ENCODE measurements at regions of chr20 and their contacts with region 1.

Region 1: GRCh38 chr20:36199345-36200257 is 36.7 kb upstream of the AAR2 start:
- DNase-seq: peak; percentile 81
- ATAC-seq: peak; percentile 79
- H3K4me3 Mint-ChIP-seq: no peak overlapping the region
- H3K27ac Mint-ChIP-seq: no peak overlapping the region
- H3K4me1 Mint-ChIP-seq: peaks cover 4% of the 10 kb centered on the region
- H3K27me3 Mint-ChIP-seq: peaks cover 26% of the 10 kb centered on the region

Region 2: DNA sequence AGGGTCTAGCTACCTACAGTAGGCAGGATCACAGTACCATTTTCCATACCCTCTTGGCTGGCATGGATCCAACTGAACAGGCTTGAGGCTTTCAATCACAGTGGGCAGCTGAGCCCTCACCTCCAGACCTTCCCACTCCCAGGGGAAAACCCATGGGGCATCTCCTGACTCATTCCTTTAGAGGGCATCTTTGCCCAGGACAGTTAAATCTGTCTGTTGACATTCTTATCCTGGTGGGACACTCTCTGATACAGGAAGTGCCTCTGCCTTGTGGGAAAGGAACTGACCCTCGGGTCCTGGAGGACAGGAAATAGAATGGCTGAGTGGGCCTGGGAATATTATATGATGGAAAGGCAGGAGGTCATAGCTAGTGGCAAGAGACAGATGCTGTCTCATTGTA is 55.3 kb before region 1 on chr20:
- CTCF ChIA-PET with region 1: interaction called, 10 read pairs
- DNase-seq: no peak
- ATAC-seq: no peak
- H3K4me3 Mint-ChIP-seq: no peak overlapping the region
- H3K27ac Mint-ChIP-seq: no peak overlapping the region
- H3K4me1 Mint-ChIP-seq: peaks cover 7% of the 10 kb centered on the region
- H3K27me3 Mint-ChIP-seq: peaks cover 17% of the 10 kb centered on the region

Region 3: DNA sequence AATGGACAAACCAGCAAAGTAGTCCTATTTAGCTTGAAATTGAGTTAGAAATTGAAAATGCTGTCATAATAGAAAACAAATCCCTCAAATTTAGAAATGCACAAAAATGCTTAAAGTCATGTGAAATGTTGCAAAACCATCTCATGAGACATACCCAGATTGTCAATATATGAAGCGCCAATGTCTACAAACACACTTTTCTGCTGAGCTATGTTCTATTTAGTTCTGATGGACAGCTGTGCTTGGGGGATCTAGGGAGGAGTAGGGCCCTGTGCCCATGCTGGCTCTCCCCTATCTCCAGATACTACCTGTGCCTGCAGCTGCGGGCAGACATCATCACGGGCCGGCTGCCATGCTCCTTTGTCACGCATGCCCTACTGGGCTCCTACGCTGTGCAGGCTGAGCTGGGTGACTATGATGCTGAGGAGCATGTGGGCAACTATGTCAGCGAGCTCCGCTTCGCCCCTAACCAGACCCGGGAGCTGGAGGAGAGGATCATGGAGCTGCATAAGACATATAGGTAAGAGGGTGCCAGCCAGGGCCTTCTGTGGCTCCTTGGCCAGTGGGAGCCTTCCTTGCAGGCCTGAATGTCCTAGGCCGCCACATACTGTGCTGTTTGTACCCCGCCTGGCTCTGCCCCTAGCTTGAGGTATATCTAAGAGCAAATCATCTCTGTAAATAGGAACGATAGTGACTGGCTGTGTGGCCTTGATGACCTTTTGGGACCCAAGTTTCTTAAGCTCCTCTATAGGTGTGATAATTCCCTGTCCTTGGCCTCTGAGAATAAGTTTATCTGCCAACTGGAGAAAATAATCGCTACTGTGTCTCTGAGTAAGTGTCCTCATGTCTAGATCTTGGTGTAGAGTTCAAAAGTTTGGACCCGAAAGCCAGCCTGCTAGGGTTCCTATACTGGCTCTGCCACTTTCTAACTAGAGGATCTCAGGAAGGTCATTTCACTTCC is 14.5 kb before region 1 on chr20:
- CTCF ChIA-PET with region 1: interaction called, 12 read pairs
- DNase-seq: no peak
- ATAC-seq: no peak
- H3K4me3 Mint-ChIP-seq: no peak overlapping the region
- H3K27ac Mint-ChIP-seq: no peak overlapping the region
- H3K4me1 Mint-ChIP-seq: peaks cover 7% of the 10 kb centered on the region
- H3K27me3 Mint-ChIP-seq: no peaks in the 10 kb centered on the region

Region 4: GRCh38 chr20:36235892-36236785 is 36.5 kb after region 1 on chr20 and contains the start of gene AAR2:
- CTCF ChIA-PET with region 1: interaction called, 15 read pairs
- DNase-seq: peak; percentile 87
- ATAC-seq: peak; percentile 99
- H3K4me3 Mint-ChIP-seq: peak within 1 kb of the TSS; percentile 72
- H3K27ac Mint-ChIP-seq: peak within 1 kb of the TSS; percentile 90
- H3K4me1 Mint-ChIP-seq: peaks cover 26% of the 10 kb centered on the region
- H3K27me3 Mint-ChIP-seq: no peaks in the 10 kb centered on the region
- total RNA-seq, gene AAR2: 18.9 to 23.9 TPM

Region 5: DNA sequence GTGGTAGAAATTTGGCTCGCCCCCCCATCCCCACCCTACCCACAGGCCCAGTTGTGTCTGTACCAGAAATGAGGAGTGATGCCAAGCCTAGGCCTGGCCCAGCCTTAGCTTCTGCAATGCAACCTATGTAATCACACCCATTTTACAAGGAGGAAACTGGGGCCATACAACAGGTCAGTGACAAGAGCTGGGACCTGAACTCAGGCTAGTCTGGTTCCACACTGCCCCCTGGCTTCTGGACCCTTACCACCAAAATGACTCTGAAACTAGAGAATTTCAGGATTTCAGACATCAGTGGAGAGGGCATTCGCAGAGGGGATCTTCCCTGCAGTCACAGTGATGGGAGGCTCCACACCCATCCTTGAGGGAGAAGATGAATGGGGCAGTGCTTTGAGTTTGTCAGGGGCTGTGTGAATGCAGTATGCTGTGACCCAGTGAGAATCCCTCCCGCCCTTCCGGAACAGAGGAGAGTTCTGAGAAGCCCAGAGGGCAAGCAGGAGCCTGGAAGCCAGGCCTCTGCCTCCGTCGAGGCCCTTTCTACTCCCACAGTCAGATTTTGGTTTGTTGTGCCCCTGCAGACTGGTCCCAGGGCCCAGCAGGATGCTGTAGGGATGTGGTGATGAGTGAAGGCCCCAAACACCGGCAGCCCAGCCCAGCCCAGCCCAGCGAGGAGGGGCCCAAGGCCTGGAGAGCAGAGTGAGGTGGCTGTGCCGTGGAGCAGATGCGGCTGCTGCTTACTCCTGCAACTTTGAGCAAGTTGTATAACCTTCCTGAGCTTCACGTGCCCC is 293.6 kb after region 1 on chr20:
- CTCF ChIA-PET with region 1: interaction called, 12 read pairs
- DNase-seq: peak; percentile 50
- ATAC-seq: peak; percentile 18
- H3K4me3 Mint-ChIP-seq: no peak overlapping the region
- H3K27ac Mint-ChIP-seq: peak overlapping the region; percentile 91
- H3K4me1 Mint-ChIP-seq: peaks cover 28% of the 10 kb centered on the region
- H3K27me3 Mint-ChIP-seq: no peaks in the 10 kb centered on the region

Measured in activated CD8-positive, alpha-beta memory T cell treated with anti-CD3 and anti-CD28 coated beads, Interleukin-2, amount 10 ng/mL, durations not matched to agents 7 days and 5 days (primary cell).